Colonic mucosa (tissue), 4 donors: ENCODE measurements at regions of chr6 and their contacts with region 1.

Region 1: GRCh38 chr6:99520855-99521632 is 5.8 kb upstream of the USP45 start:
- DNase-seq: peak; percentile 88
- H3K4me3 ChIP-seq: peak overlapping the region; percentile 62
- H3K27ac ChIP-seq: peak overlapping the region; percentile 91
- H3K4me1 ChIP-seq: no peaks in the 10 kb centered on the region
- H3K27me3 ChIP-seq: no peaks in the 10 kb centered on the region
- CTCF ChIP-seq: peak; percentile 81

Region 2: GRCh38 chr6:99241905-99242534 is 279.0 kb before region 1 on chr6:
- intact Hi-C with region 1: no loop called
- DNase-seq: no peak
- H3K4me3 ChIP-seq: no peak overlapping the region
- H3K27ac ChIP-seq: no peak overlapping the region
- H3K4me1 ChIP-seq: no peaks in the 10 kb centered on the region
- H3K27me3 ChIP-seq: no peaks in the 10 kb centered on the region
- CTCF ChIP-seq: no peak

Region 3: GRCh38 chr6:99364026-99364425 is 157.0 kb before region 1 on chr6:
- intact Hi-C with region 1: no loop called
- DNase-seq: no peak
- H3K4me3 ChIP-seq: no peak overlapping the region
- H3K27ac ChIP-seq: no peak overlapping the region
- H3K4me1 ChIP-seq: no peaks in the 10 kb centered on the region
- H3K27me3 ChIP-seq: no peaks in the 10 kb centered on the region
- CTCF ChIP-seq: no peak

Region 4: GRCh38 chr6:99573980-99574617 is 53.1 kb after region 1 on chr6:
- intact Hi-C with region 1: loop called (anchors 5 kb)
- DNase-seq: no peak
- H3K4me3 ChIP-seq: no peak overlapping the region
- H3K27ac ChIP-seq: no peak overlapping the region
- H3K4me1 ChIP-seq: no peaks in the 10 kb centered on the region
- H3K27me3 ChIP-seq: no peaks in the 10 kb centered on the region
- CTCF ChIP-seq: no peak

Region 5: DNA sequence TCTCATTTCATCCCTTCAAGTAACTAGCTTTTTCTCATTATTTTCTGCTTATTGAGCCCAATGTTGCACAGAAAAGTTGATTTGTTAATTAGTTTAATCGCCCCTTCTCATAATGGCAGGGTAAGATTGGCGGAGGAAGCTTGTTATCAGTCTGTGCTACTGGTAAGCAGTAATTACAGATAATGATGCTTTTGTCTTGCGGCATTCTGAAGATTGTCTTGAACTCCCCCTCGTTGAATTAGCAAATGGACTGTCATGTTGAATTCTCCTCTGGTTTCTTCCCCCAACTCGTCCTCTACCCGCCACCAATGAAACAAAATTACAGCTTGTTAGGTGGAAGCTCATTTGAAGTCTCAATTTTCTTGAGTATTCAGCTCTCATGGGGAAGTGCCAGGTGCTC is 124.9 kb after region 1 on chr6:
- intact Hi-C with region 1: no loop called
- DNase-seq: no peak
- H3K4me3 ChIP-seq: no peak overlapping the region
- H3K27ac ChIP-seq: no peak overlapping the region
- H3K4me1 ChIP-seq: no peaks in the 10 kb centered on the region
- H3K27me3 ChIP-seq: no peaks in the 10 kb centered on the region
- CTCF ChIP-seq: no peak

Region 6: DNA sequence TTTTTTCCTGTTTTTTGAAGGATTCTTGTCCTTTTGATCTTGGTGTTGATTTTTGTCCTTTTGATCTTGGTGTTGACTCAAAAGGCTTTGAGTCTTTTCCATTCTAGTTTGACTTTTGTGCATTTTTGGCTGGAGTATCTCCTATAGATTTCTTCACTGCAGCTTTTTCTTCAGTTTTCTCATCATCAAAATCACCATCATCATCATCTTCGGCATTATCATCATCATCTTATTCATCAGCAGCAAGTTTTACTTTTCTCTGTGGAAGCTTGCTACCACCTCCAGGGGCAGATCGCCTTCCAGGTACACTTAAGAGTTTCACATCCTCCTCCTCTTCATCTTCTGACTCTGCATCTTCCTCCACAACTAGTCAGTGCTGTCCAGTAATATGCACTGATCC is 529.5 kb after region 1 on chr6:
- intact Hi-C with region 1: no loop called
- DNase-seq: no peak
- H3K4me3 ChIP-seq: no peak overlapping the region
- H3K27ac ChIP-seq: no peak overlapping the region
- H3K4me1 ChIP-seq: no peaks in the 10 kb centered on the region
- H3K27me3 ChIP-seq: no peaks in the 10 kb centered on the region
- CTCF ChIP-seq: no peak